Endothelial cell of umbilical vein (primary cell): ENCODE measurements at regions of chr19 and their contacts with region 1.

Region 1: DNA sequence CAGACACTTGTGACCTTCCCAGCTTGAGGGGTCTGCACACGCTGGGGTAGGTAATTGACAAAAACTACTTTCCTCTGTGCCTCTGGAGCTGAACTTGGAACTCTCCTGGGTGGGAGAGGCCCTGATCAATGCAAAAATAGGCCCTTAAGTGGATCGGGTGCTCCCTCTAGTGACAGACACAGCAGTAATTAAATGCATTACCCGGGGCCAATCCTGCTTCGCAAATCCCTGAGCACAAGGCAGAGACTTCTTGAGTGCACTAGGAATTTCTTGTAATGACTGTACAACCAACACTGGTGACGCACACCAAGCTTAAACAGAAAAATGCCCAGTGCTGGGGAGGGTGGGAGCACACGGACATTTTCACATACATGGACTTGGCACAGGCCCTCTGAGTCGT is 10.6 kb upstream of the UBE2S start:
- DNase-seq: peak; percentile 71
- H3K4me3 ChIP-seq: no peak overlapping the region
- H3K27ac ChIP-seq: no peak overlapping the region
- H3K4me1 ChIP-seq: no peaks in the 10 kb centered on the region
- H3K27me3 ChIP-seq: peaks cover 0 to 5% of the 10 kb centered on the region in 2 experiments
- CTCF ChIP-seq: peak; percentile 64 to 71
- POLR2A ChIP-seq: no peak

Region 2: GRCh38 chr19:55289117-55289796 is 128.9 kb before region 1 on chr19:
- CTCF ChIA-PET with region 1: interaction called, 10 read pairs
- POLR2A ChIA-PET with region 1: no interaction called
- dilution Hi-C with region 1: no loop called
- intact Hi-C with region 1: loop called (anchors 2 kb)
- DNase-seq: no peak
- H3K4me3 ChIP-seq: no peak overlapping the region
- H3K27ac ChIP-seq: no peak overlapping the region
- H3K4me1 ChIP-seq: no peaks in the 10 kb centered on the region
- H3K27me3 ChIP-seq: no peaks in the 10 kb centered on the region
- CTCF ChIP-seq: no peak
- POLR2A ChIP-seq: no peak

Region 3: DNA sequence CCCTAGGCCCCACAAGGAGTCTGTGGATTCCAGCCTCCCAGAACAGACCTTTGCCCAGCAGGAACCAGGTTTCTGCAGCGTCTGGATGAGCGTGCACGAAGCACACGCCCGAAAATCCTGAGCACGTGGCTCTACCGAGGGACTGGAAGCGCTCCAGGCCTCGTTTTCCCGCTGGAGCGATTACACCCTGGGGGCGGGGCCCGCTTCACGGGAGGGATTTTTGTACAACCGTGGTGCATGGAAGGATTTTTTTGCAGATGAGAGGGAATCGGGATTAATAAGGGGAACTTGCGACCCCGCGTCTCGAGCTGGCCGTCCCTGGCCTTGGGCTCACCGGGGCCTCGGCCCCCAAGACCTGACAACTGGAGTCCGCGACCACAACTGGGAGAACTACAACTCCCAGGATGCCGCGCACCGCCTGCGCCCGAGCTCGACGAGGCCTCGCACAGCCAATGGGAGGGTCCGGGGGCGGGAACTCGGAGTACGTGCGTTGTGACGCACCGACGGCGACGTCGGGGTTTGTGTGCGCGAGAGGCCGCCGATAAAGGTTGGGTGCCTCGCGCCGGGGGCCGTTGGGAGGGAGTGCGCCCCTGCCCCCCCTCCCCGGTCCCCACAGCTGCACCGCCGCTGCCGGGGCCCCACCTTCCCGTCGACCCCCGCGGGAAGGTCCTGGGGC is 58.1 kb after region 1 on chr19 and contains the start of gene ZNF628:
- CTCF ChIA-PET with region 1: no interaction called
- POLR2A ChIA-PET with region 1: no interaction called
- dilution Hi-C with region 1: no loop called
- intact Hi-C with region 1: no loop called
- DNase-seq: peak; percentile 97
- H3K4me3 ChIP-seq: peak within 1 kb of the TSS; percentile 63 to 95 (median 95)
- H3K27ac ChIP-seq: peak within 1 kb of the TSS; percentile 66
- H3K4me1 ChIP-seq: peaks cover 10% of the 10 kb centered on the region
- H3K27me3 ChIP-seq: no peaks in the 10 kb centered on the region
- CTCF ChIP-seq: no peak
- POLR2A ChIP-seq: peak; percentile 28
- total RNA-seq, gene ZNF628: 9.0 and 10.4 TPM in 2 replicates

Region 4: GRCh38 chr19:55586976-55587668 is 168.9 kb after region 1 on chr19:
- CTCF ChIA-PET with region 1: no interaction called
- POLR2A ChIA-PET with region 1: no interaction called
- dilution Hi-C with region 1: no loop called
- intact Hi-C with region 1: no loop called
- DNase-seq: peak; percentile 92
- H3K4me3 ChIP-seq: peak overlapping the region in 1 of 3 experiments; percentile 3
- H3K27ac ChIP-seq: no peak overlapping the region
- H3K4me1 ChIP-seq: no peaks in the 10 kb centered on the region
- H3K27me3 ChIP-seq: peaks cover 4 to 7% of the 10 kb centered on the region in 2 experiments
- CTCF ChIP-seq: no peak
- POLR2A ChIP-seq: no peak

Region 5: DNA sequence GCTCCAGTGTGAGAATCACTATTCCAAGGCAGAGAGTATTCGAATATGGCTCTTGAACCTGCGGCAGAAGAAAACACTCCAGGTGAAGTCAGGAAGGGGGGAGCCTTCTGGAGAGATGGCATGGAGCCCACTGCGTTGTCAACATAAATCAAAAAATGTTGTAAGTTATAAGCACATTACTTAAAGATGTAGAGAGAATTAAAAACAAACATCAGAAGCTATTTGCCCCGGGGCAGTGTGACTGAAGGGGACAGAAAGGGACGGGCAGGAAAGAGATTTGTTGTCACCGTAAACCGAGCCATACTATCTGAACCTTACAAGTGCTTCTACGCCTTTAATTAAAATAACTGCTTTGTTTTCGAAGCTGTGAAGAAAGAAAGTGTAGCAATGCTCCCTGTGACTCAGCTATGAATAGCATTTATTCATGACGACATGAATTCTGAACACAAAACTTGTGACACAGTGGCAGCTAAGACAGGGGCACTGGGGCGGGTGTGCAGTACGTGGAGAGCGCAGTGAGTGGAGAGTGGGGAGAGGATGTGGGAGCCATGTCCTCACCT is 672.8 kb after region 1 on chr19:
- CTCF ChIA-PET with region 1: no interaction called
- POLR2A ChIA-PET with region 1: no interaction called
- dilution Hi-C with region 1: no loop called
- intact Hi-C with region 1: no loop called
- DNase-seq: no peak
- H3K4me3 ChIP-seq: no peak overlapping the region
- H3K27ac ChIP-seq: no peak overlapping the region
- H3K4me1 ChIP-seq: no peaks in the 10 kb centered on the region
- H3K27me3 ChIP-seq: no peaks in the 10 kb centered on the region
- CTCF ChIP-seq: no peak
- POLR2A ChIP-seq: no peak